ENCODE measurements at regions of chr12 and their contacts with region 1.

Region 1: DNA sequence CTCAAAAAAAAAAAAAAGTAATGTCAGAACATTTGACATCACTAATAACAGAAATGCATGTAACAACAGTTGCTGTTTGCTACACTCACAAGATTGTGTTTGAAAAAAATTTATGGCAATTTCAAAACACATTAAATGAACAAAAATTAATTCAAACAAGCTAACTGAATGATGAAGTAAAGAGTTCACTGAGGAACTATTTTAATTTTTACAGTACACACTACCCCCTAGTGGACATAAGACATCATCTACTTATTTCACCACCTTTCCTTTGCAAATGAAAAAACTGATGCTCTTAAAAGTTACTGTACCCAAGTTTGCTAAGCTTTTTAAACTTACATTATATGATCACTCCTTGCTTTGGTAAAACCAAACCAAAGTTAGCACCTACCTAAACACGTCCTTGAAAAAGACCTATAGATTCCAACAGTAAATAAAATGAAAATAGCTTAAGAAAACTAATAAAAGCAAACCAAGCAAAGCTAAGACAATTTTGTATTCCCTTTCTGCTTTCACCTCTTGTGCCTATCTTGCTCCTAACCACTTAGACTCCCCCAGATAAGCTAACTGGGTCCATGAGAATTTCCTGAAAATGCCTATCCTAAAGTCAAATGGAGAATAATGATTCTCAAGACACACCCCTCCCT is 22.2 kb downstream of the UBE2N start:
- DNase-seq: peak in 6 of 9 donors; percentile 36 to 68 (median 54)
- ATAC-seq: peak; percentile 88
- H3K4me3 ChIP-seq: no peak overlapping the region
- H3K4me3 Mint-ChIP-seq: peak overlapping the region in 2 of 10 donors; percentile 10 to 34
- H3K27ac ChIP-seq: no peak overlapping the region
- H3K27ac Mint-ChIP-seq: peak overlapping the region in 8 of 9 donors; percentile 19 to 92 (median 54)
- H3K4me1 ChIP-seq: peaks cover 0 to 16% of the 10 kb centered on the region in 2 donors
- H3K4me1 Mint-ChIP-seq: peaks cover 45 to 95% (median 88%) of the 10 kb centered on the region in 7 donors
- H3K27me3 ChIP-seq: no peaks in the 10 kb centered on the region
- H3K27me3 Mint-ChIP-seq: no peaks in the 10 kb centered on the region

Region 2: GRCh38 chr12:92629349-92630065 is 790.0 kb before region 1 on chr12:
- CTCF ChIA-PET with region 1: no interaction called
- POLR2A ChIA-PET with region 1: no interaction called
- intact Hi-C with region 1: no loop called
- DNase-seq: no peak
- ATAC-seq: no peak
- H3K4me3 ChIP-seq: no peak overlapping the region
- H3K4me3 Mint-ChIP-seq: no peak overlapping the region
- H3K27ac ChIP-seq: no peak overlapping the region
- H3K27ac Mint-ChIP-seq: no peak overlapping the region
- H3K4me1 ChIP-seq: no peaks in the 10 kb centered on the region
- H3K4me1 Mint-ChIP-seq: no peaks in the 10 kb centered on the region
- H3K27me3 ChIP-seq: no peaks in the 10 kb centered on the region
- H3K27me3 Mint-ChIP-seq: peaks cover 0 to 4% (median 0%) of the 10 kb centered on the region in 5 donors

Region 3: GRCh38 chr12:92784795-92785562 is 634.5 kb before region 1 on chr12:
- CTCF ChIA-PET with region 1: interaction called, 6 read pairs
- POLR2A ChIA-PET with region 1: no interaction called
- intact Hi-C with region 1: loop called in 1 of 2 experiments (anchors 1 kb)
- DNase-seq: peak in 7 of 9 donors; percentile 61 to 80 (median 70)
- ATAC-seq: peak; percentile 99
- H3K4me3 ChIP-seq: no peak overlapping the region
- H3K4me3 Mint-ChIP-seq: no peak overlapping the region
- H3K27ac ChIP-seq: no peak overlapping the region
- H3K27ac Mint-ChIP-seq: peak overlapping the region in 1 of 9 donors; percentile 0
- H3K4me1 ChIP-seq: no peaks in the 10 kb centered on the region
- H3K4me1 Mint-ChIP-seq: peaks cover 4 to 19% (median 9%) of the 10 kb centered on the region in 7 donors
- H3K27me3 ChIP-seq: no peaks in the 10 kb centered on the region
- H3K27me3 Mint-ChIP-seq: no peaks in the 10 kb centered on the region

Region 4: DNA sequence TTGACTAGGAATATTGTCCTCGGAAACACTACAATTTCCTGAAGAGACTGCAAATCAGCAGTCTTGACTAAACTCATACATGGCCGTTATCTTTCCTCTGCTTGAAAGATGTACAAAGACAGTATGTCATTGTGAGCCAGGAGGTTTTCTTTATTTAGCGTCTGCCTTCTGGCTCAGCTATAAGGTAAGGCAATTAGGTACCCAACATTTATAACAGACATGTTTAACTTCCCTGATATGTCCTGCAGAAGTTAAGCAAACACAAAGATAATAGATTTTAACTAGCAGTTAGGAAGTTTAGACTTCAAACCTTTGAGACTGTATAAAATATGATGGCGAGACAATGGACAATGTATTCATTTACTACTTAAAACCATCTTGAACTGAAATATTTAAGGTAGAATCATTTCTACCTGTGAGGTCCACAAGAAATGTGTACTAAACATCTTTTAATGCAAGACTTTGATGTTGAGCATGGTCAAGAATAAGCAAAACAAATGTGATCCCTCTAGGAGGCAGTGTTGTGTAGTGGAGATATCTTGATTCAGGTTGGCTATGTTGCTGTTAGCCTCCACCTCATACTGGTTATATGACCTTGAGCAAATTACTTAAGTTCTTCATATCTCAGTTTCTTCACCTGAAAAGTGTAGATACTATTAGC is 394.2 kb before region 1 on chr12:
- CTCF ChIA-PET with region 1: no interaction called
- POLR2A ChIA-PET with region 1: no interaction called
- intact Hi-C with region 1: loop called in 1 of 2 experiments (anchors 5 kb)
- DNase-seq: peak in 3 of 9 donors; percentile 2 to 15 (median 4)
- ATAC-seq: peak; percentile 56
- H3K4me3 ChIP-seq: no peak overlapping the region
- H3K4me3 Mint-ChIP-seq: no peak overlapping the region
- H3K27ac ChIP-seq: no peak overlapping the region
- H3K27ac Mint-ChIP-seq: no peak overlapping the region
- H3K4me1 ChIP-seq: no peaks in the 10 kb centered on the region
- H3K4me1 Mint-ChIP-seq: no peaks in the 10 kb centered on the region
- H3K27me3 ChIP-seq: no peaks in the 10 kb centered on the region
- H3K27me3 Mint-ChIP-seq: peaks cover 0 to 3% (median 0%) of the 10 kb centered on the region in 5 donors

Region 5: GRCh38 chr12:93139028-93139665 is 280.4 kb before region 1 on chr12:
- CTCF ChIA-PET with region 1: interaction called, 14 read pairs
- POLR2A ChIA-PET with region 1: no interaction called
- intact Hi-C with region 1: no loop called
- DNase-seq: no peak
- ATAC-seq: peak; percentile 61
- H3K4me3 ChIP-seq: no peak overlapping the region
- H3K4me3 Mint-ChIP-seq: no peak overlapping the region
- H3K27ac ChIP-seq: no peak overlapping the region
- H3K27ac Mint-ChIP-seq: peak overlapping the region in 1 of 9 donors; percentile 12
- H3K4me1 ChIP-seq: no peaks in the 10 kb centered on the region
- H3K4me1 Mint-ChIP-seq: peaks cover 8 to 22% (median 15%) of the 10 kb centered on the region in 7 donors
- H3K27me3 ChIP-seq: no peaks in the 10 kb centered on the region
- H3K27me3 Mint-ChIP-seq: peaks cover 0 to 3% (median 0%) of the 10 kb centered on the region in 5 donors

Region 6: DNA sequence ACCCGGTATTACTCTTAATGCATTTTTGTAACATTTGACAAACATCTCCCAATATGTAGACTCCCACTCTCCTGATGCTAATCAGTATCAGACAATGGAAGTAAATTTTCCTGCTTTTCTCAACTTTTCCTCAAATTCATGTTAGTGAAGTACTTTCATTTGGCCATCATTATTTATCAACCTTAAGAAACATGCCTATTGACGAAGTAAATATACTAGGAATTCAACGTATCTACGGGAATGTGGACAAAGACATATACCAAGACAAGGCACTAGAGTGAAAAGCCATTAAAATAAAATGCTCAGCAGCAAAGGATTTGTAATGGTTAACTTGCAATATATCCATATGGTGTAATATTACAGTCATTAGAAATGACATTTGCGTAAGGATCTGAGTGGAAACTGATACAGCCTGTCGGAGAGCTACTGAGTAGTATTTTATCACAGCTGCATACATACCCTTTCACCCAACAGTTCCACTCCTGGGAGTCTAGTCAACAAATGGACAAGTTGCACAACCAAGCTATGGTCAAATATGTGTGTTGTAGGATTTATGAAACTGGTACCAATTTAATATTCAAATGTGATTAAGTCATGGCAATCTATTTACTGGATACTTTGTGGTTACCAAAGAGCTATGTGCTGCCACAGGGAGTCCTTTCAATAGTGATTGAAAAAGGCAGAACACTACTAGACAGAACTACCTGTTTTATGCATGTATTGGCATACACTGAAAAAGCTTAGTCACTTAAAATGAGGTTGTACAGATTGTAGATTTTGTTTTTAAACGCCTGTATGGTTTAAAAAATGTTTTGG is 15.3 kb before region 1 on chr12:
- CTCF ChIA-PET with region 1: interaction called, 11 read pairs
- POLR2A ChIA-PET with region 1: no interaction called
- intact Hi-C with region 1: no loop called
- DNase-seq: no peak
- ATAC-seq: no peak
- H3K4me3 ChIP-seq: no peak overlapping the region
- H3K4me3 Mint-ChIP-seq: no peak overlapping the region
- H3K27ac ChIP-seq: no peak overlapping the region
- H3K27ac Mint-ChIP-seq: peak overlapping the region in 5 of 9 donors; percentile 9 to 56 (median 31)
- H3K4me1 ChIP-seq: no peaks in the 10 kb centered on the region
- H3K4me1 Mint-ChIP-seq: peaks cover 3 to 30% (median 11%) of the 10 kb centered on the region in 7 donors
- H3K27me3 ChIP-seq: no peaks in the 10 kb centered on the region
- H3K27me3 Mint-ChIP-seq: no peaks in the 10 kb centered on the region

Region 7: DNA sequence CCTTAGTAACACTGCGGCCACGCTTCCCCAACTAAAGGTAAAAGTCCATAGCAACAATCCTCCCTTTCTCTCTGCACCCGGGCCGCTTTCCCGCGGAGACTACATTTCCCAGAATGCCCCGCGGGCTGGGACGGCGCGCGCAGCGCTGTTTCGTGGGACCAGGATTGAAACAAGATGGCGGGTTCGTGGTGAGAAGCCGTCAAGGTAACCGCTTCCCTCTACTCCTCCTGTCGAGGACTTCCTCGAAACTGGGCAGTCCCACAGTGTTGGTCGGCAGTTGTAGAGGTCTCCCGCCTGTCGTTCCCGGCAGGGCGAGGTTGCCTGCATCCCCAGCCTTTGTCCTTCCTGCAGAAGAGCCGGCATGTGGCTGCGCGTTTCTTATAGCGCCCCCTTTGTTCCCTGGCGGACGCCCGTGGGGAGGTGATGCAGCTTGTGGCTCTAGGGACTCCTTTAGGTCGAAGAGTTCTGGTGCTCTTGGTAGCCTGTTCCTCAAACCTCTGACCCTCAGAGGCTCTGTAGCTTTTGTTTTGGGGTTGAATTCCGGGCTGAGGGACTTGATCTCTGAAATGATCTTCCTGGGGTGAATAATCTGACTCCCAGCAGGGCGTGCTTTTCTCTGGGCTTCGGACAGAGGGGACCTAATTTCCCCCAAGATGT is 48.0 kb after region 1 on chr12 and contains the start of gene MRPL42:
- CTCF ChIA-PET with region 1: interaction called, 4 read pairs
- POLR2A ChIA-PET with region 1: interaction called, 3 read pairs
- intact Hi-C with region 1: loop called in 1 of 2 experiments (anchors 1 kb)
- DNase-seq: peak; percentile 86 to 96 (median 94)
- ATAC-seq: peak; percentile 97
- H3K4me3 ChIP-seq: peak within 1 kb of the TSS; percentile 94
- H3K4me3 Mint-ChIP-seq: peak within 1 kb of the TSS; percentile 85 to 96 (median 93)
- H3K27ac ChIP-seq: peak within 1 kb of the TSS; percentile 85
- H3K27ac Mint-ChIP-seq: peak within 1 kb of the TSS; percentile 90 to 98 (median 95)
- H3K4me1 ChIP-seq: peaks cover 8 to 10% of the 10 kb centered on the region in 2 donors
- H3K4me1 Mint-ChIP-seq: peaks cover 28 to 48% (median 36%) of the 10 kb centered on the region in 7 donors
- H3K27me3 ChIP-seq: no peaks in the 10 kb centered on the region
- H3K27me3 Mint-ChIP-seq: no peaks in the 10 kb centered on the region
- total RNA-seq, gene MRPL42: 30.1 to 65.8 (median 45.6) TPM

Region 8: DNA sequence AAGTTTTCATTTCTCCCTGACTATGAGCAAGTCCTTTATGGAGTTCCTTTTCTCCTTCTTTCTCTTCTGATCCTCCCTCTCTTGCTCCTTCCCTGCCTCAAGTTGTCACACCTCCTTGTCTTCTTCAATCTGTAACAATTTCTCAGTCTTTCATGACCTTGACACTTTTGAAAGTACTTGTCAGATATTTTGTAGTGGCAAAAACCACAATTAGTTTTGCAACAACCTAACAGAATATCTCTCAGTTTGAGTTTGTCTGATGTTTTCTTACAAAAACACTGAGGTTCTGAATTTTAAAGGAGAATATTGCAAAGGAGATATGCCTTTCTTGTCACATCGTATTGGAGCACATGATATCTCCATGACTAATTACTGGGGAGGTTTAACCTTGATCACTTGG is 253.6 kb after region 1 on chr12:
- CTCF ChIA-PET with region 1: no interaction called
- POLR2A ChIA-PET with region 1: no interaction called
- intact Hi-C with region 1: no loop called
- DNase-seq: no peak
- ATAC-seq: no peak
- H3K4me3 ChIP-seq: no peak overlapping the region
- H3K4me3 Mint-ChIP-seq: no peak overlapping the region
- H3K27ac ChIP-seq: no peak overlapping the region
- H3K27ac Mint-ChIP-seq: no peak overlapping the region
- H3K4me1 ChIP-seq: peaks cover 4 to 5% of the 10 kb centered on the region in 2 donors
- H3K4me1 Mint-ChIP-seq: peaks cover 9 to 21% (median 14%) of the 10 kb centered on the region in 7 donors
- H3K27me3 ChIP-seq: no peaks in the 10 kb centered on the region
- H3K27me3 Mint-ChIP-seq: peaks cover 6 to 13% (median 9%) of the 10 kb centered on the region in 5 donors

Region 9: GRCh38 chr12:95286713-95287112 is 1867.2 kb after region 1 on chr12:
- CTCF ChIA-PET with region 1: no interaction called
- POLR2A ChIA-PET with region 1: no interaction called
- intact Hi-C with region 1: no loop called
- DNase-seq: no peak
- ATAC-seq: no peak
- H3K4me3 ChIP-seq: no peak overlapping the region
- H3K4me3 Mint-ChIP-seq: no peak overlapping the region
- H3K27ac ChIP-seq: no peak overlapping the region
- H3K27ac Mint-ChIP-seq: no peak overlapping the region
- H3K4me1 ChIP-seq: no peaks in the 10 kb centered on the region
- H3K4me1 Mint-ChIP-seq: peaks cover 0 to 4% (median 0%) of the 10 kb centered on the region in 7 donors
- H3K27me3 ChIP-seq: no peaks in the 10 kb centered on the region
- H3K27me3 Mint-ChIP-seq: no peaks in the 10 kb centered on the region